ENCODE measurements at regions of chr4 and their contacts with region 1.

Region 1: GRCh38 chr4:87848622-87849351 is 16.0 kb downstream of the MEPE start:
- DNase-seq: peak; percentile 21 to 45 (median 25)
- H3K4me3 ChIP-seq: no peak overlapping the region
- H3K4me3 Mint-ChIP-seq: peak overlapping the region in 7 of 8 donors; percentile 1 to 74 (median 61)
- H3K27ac ChIP-seq: no peak overlapping the region
- H3K27ac Mint-ChIP-seq: no peak overlapping the region
- H3K4me1 ChIP-seq: peaks cover 4% of the 10 kb centered on the region
- H3K4me1 Mint-ChIP-seq: peaks cover 0 to 9% (median 4%) of the 10 kb centered on the region in 4 donors
- H3K27me3 ChIP-seq: no peaks in the 10 kb centered on the region
- H3K27me3 Mint-ChIP-seq: peaks cover 16 to 20% of the 10 kb centered on the region in 2 donors

Region 2: GRCh38 chr4:87270144-87270543 is 578.6 kb before region 1 on chr4:
- CTCF ChIA-PET with region 1: no interaction called
- POLR2A ChIA-PET with region 1: no interaction called
- intact Hi-C with region 1: loop called (anchors 5 kb)
- DNase-seq: no peak
- H3K4me3 ChIP-seq: no peak overlapping the region
- H3K4me3 Mint-ChIP-seq: no peak overlapping the region
- H3K27ac ChIP-seq: no peak overlapping the region
- H3K27ac Mint-ChIP-seq: no peak overlapping the region
- H3K4me1 ChIP-seq: no peaks in the 10 kb centered on the region
- H3K4me1 Mint-ChIP-seq: no peaks in the 10 kb centered on the region
- H3K27me3 ChIP-seq: no peaks in the 10 kb centered on the region
- H3K27me3 Mint-ChIP-seq: peaks cover 6 to 11% of the 10 kb centered on the region in 2 donors

Region 3: DNA sequence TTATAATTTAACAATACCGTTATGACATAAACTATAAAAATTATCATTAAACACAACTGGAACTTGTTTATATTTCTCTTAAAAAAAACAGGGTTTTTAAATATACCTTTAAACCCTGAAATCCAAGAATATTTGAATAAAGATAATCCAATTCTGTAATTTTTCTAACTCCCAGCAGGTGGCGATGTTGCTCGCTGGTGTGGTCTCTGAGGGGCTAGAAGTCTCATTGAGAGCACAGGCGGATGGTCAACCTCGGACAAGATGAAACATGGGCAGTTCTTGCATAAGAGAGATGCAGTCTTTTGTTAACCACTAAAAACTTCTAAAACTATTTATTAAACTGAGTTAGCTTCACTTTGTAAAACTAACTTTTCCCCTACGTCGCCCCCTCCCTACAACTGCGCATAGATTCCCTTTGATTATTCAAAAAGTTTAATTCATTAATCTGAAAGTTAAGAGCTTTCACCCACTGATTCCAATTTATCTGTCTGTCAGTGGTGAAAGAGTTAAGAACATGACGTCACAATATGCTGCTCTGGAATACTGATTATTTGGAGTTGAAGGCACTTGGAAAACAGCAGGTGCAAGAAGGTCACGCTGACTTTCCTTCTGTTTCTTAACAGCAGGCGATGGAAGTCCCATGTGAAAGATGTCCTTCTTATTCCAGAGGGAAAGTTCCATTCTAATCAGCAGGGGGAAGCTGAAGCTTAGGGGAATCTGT is 169.2 kb before region 1 on chr4:
- CTCF ChIA-PET with region 1: interaction called, 4 read pairs
- POLR2A ChIA-PET with region 1: no interaction called
- intact Hi-C with region 1: loop called (anchors 5 kb)
- DNase-seq: peak in 4 of 5 donors; percentile 0 to 18 (median 3)
- H3K4me3 ChIP-seq: no peak overlapping the region
- H3K4me3 Mint-ChIP-seq: no peak overlapping the region
- H3K27ac ChIP-seq: no peak overlapping the region
- H3K27ac Mint-ChIP-seq: no peak overlapping the region
- H3K4me1 ChIP-seq: no peaks in the 10 kb centered on the region
- H3K4me1 Mint-ChIP-seq: no peaks in the 10 kb centered on the region
- H3K27me3 ChIP-seq: no peaks in the 10 kb centered on the region
- H3K27me3 Mint-ChIP-seq: peaks cover 0 to 3% of the 10 kb centered on the region in 2 donors

Region 4: GRCh38 chr4:87865960-87866598 is 17.3 kb after region 1 on chr4:
- CTCF ChIA-PET with region 1: interaction called, 18 read pairs
- POLR2A ChIA-PET with region 1: no interaction called
- intact Hi-C with region 1: no loop called
- DNase-seq: no peak
- H3K4me3 ChIP-seq: no peak overlapping the region
- H3K4me3 Mint-ChIP-seq: no peak overlapping the region
- H3K27ac ChIP-seq: no peak overlapping the region
- H3K27ac Mint-ChIP-seq: no peak overlapping the region
- H3K4me1 ChIP-seq: no peaks in the 10 kb centered on the region
- H3K4me1 Mint-ChIP-seq: no peaks in the 10 kb centered on the region
- H3K27me3 ChIP-seq: no peaks in the 10 kb centered on the region
- H3K27me3 Mint-ChIP-seq: peaks cover 6 to 13% of the 10 kb centered on the region in 2 donors

Region 5: GRCh38 chr4:87973283-87974169 is 124.7 kb after region 1 on chr4:
- CTCF ChIA-PET with region 1: interaction called, 3 read pairs
- POLR2A ChIA-PET with region 1: no interaction called
- intact Hi-C with region 1: loop called (anchors 2 kb)
- DNase-seq: peak in 4 of 5 donors; percentile 9 to 22 (median 16)
- H3K4me3 ChIP-seq: no peak overlapping the region
- H3K4me3 Mint-ChIP-seq: no peak overlapping the region
- H3K27ac ChIP-seq: no peak overlapping the region
- H3K27ac Mint-ChIP-seq: no peak overlapping the region
- H3K4me1 ChIP-seq: peaks cover 7% of the 10 kb centered on the region
- H3K4me1 Mint-ChIP-seq: peaks cover 6 to 11% (median 7%) of the 10 kb centered on the region in 4 donors
- H3K27me3 ChIP-seq: peaks cover 5% of the 10 kb centered on the region
- H3K27me3 Mint-ChIP-seq: peaks cover 20 to 28% of the 10 kb centered on the region in 2 donors

Measured in CD4-positive, alpha-beta memory T cell (primary cell).